Activated CD4-positive, alpha-beta T cell treated with anti-CD3 and anti-CD28 coated beads, Interleukin-2, amount 10 ng/mL, durations not matched to agents 24 days and 14 days (primary cell): ENCODE measurements at regions of chr12 and their contacts with region 1.

Region 1: DNA sequence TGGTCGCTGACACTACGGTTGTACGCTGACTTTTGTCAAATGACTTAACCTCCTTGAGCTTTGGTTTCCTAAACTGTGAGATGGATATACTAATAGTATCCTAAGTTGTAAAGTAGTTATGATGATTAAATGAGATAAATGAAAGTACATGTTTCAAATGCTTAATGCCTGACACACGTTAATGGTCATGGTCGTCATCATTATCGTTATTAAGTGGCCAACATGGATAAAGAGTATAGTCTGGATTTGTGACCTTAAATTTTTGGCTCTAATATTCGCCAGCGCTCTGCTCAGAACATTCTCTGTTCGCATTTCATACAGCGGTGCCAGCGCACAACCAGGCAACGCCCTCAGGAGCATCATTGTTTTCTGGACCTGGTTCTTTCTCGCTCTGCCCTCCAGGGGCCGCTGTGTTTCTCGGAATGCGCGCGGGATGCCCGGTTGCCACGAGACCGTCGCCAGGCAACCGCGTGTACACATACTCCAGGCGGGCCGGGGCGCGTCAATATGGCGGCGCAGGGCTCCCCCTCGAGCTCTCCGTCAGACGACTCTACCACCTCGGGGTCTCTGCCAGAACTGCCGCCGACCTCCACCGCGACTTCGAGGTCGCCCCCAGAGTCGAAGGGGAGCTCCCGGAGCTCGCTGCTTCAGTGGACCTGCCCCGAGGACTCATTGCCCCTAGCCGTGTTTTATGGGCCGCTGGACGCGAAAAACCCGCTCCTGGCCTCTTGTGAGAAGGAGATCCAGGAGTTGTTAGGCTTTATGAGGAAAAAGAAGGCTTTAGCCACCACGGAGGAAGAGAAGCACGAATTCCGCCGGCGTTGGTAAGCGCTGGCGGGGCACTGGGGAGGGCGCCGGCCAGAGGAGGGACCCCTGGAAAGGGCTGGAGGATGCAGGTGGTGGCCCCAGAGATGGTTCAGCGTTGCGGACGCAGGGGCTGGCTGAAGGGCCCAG is at the start of gene CFAP54:
- DNase-seq: peak; percentile 98
- H3K4me3 Mint-ChIP-seq: peak within 1 kb of the TSS; percentile 88
- H3K27ac Mint-ChIP-seq: peak within 1 kb of the TSS; percentile 81
- H3K4me1 Mint-ChIP-seq: peaks cover 32% of the 10 kb centered on the region
- H3K27me3 Mint-ChIP-seq: peaks cover 23% of the 10 kb centered on the region
- total RNA-seq, gene CFAP54: 0.09 TPM in 2 replicates

Region 2: DNA sequence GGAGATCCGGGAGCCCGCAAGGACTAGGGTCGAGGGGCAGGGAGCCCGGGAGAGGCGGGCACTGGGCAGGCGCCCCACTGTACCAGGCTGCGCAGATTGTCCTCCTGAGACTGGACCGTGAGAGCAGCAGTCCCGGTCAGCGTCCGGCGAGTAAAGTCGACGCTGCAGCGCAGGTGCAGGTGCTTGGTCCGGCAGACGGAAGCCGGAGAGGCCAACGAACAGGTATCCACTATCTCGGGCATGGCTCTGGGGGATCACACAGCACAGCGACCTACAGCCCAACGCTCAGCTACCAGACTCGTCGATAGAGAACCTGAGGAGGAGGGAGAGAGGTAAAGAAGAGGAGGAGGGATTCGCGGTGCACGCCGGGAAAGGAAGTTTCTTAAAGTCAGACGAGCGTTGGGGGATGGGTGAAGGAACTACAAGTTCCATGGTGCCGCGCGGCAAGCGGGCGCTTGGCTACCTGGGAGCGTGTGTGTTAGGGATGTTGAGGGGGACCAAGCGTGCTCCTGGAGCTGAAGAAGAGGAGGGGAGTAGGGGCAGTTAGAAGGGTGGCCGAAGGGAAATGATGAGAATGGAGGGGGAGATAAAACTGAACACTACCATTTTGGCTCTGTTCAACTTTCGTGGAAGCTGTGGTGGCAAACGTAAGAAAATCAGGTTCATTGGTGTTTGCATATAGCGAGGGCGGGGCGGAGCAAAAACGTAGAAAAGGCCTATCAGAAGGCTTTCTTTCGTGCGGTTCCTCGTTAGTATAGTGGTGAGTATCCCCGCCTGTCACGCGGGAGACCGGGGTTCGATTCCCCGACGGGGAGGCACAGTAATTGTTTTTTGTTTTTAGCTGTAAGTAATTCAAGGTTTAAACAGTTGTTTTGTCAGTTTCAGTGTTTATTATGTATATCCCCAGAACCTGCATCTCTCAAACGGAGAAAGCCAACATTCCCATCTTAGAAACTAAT is 453.8 kb before region 1 on chr12 and contains the start of gene LTA4H:
- intact Hi-C with region 1: loop called (anchors 1 kb)
- DNase-seq: peak; percentile 98
- H3K4me3 Mint-ChIP-seq: no peak within 1 kb of the TSS
- H3K27ac Mint-ChIP-seq: no peak within 1 kb of the TSS
- H3K4me1 Mint-ChIP-seq: peaks cover 6% of the 10 kb centered on the region
- H3K27me3 Mint-ChIP-seq: no peaks in the 10 kb centered on the region
- total RNA-seq, gene LTA4H: 63.4 and 64.1 TPM in 2 replicates

Region 3: GRCh38 chr12:96194971-96195844 is 294.2 kb before region 1 on chr12:
- intact Hi-C with region 1: loop called (anchors 5 kb)
- DNase-seq: peak; percentile 91
- H3K4me3 Mint-ChIP-seq: peak overlapping the region; percentile 94
- H3K27ac Mint-ChIP-seq: peak overlapping the region; percentile 97
- H3K4me1 Mint-ChIP-seq: peaks cover 41% of the 10 kb centered on the region
- H3K27me3 Mint-ChIP-seq: no peaks in the 10 kb centered on the region

Region 4: GRCh38 chr12:96399919-96400797 is 89.2 kb before region 1 on chr12 and contains the start of gene CDK17:
- intact Hi-C with region 1: loop called (anchors 1 kb)
- DNase-seq: peak; percentile 96
- H3K4me3 Mint-ChIP-seq: peak within 1 kb of the TSS; percentile 92
- H3K27ac Mint-ChIP-seq: peak within 1 kb of the TSS; percentile 97
- H3K4me1 Mint-ChIP-seq: peaks cover 45% of the 10 kb centered on the region
- H3K27me3 Mint-ChIP-seq: no peaks in the 10 kb centered on the region
- total RNA-seq, gene CDK17: 28.0 and 30.5 TPM in 2 replicates

Region 5: DNA sequence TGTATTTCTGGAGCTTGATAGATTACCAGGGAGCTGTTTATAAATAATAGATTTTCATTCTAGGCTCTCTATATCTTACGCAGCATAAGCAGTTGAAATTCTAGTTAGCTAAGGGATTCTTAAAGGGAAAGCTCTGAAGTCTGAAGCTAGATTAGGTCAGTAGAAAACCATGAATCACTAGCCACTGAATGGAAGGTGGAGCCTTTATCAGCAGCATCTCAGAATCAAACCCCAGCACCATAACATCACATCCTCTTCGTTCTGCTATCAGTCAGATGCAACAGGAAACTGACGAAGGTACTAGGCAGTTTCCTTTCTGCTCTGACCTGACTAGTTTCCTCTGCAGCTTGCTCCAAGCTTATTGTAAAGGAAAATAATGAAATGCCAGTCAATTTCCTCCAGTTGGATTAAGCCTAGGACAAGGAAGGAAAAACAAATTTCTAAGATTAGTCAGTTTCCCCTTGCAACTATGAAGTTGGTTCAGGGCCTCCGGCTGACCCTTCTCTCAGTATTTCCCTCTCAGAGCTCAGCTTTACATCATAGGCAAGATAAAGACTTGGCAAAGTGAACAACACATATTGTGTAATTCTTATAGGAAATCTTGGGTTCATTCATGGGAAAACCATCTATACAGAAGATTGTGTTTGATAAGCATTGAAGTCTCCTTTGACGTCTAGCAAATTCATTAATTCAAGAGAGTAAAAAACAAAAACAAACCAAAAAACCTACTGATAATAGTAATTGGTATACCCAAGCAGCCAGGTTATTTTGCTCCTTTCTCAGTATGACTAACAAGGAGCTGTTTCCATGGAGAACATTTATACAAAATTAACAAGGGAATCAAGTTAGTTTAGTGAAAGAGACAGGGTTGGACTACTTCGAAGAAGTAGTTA is 43.4 kb before region 1 on chr12:
- intact Hi-C with region 1: loop called (anchors 1 kb)
- DNase-seq: peak; percentile 90
- H3K4me3 Mint-ChIP-seq: peak overlapping the region; percentile 70
- H3K27ac Mint-ChIP-seq: peak overlapping the region; percentile 87
- H3K4me1 Mint-ChIP-seq: peaks cover 40% of the 10 kb centered on the region
- H3K27me3 Mint-ChIP-seq: no peaks in the 10 kb centered on the region

Region 6: GRCh38 chr12:97386133-97386581 is 896.8 kb after region 1 on chr12:
- intact Hi-C with region 1: no loop called
- DNase-seq: no peak
- H3K4me3 Mint-ChIP-seq: no peak overlapping the region
- H3K27ac Mint-ChIP-seq: no peak overlapping the region
- H3K4me1 Mint-ChIP-seq: no peaks in the 10 kb centered on the region
- H3K27me3 Mint-ChIP-seq: no peaks in the 10 kb centered on the region